Endothelial cell of umbilical vein (primary cell): ENCODE measurements at regions of chr2 and their contacts with region 1.

Region 1: GRCh38 chr2:10302479-10303180 is at the start of gene HPCAL1:
- DNase-seq: peak; percentile 81
- H3K4me3 ChIP-seq: peak within 1 kb of the TSS; percentile 67 to 78 (median 72)
- H3K27ac ChIP-seq: peak within 1 kb of the TSS; percentile 27
- H3K4me1 ChIP-seq: peaks cover 22% of the 10 kb centered on the region
- H3K27me3 ChIP-seq: no peaks in the 10 kb centered on the region
- CTCF ChIP-seq: peak; percentile 26 to 53
- POLR2A ChIP-seq: peak; percentile 89
- total RNA-seq, gene HPCAL1: 68.1 and 77.4 TPM in 2 replicates

Region 2: DNA sequence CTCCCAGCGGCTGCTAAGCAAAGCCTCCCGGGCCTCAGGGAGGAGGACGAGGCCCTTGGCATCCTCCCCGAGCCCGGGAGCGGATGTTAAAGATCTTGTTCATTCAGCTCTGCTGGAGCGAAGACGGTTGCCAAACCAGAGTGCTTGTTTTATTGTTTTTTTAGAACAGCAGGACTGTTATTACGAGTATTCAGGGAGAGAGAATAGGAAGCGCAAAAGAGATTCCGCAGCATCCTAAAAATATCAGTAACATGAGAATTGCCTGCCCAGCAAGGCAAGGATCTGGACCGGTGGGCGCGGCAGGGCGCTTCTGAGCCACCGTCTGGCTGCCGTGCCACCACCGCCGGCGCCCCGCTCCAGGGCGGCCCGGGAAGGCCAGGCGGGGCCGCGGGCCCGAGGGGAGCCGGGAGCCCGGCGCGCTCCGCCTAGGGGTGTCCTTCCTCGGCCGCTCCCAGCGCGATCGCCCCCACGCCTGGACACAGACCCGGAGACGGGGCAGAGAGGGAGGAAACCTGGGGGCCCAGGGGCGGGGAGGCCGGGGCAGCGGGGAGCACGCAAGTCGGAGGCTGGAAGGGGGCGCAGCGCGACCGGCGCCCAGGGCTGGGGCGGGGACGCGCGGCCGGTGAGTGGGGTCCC is 223.3 kb before region 1 on chr2:
- CTCF ChIA-PET with region 1: no interaction called
- POLR2A ChIA-PET with region 1: no interaction called
- dilution Hi-C with region 1: no loop called
- intact Hi-C with region 1: no loop called
- DNase-seq: no peak
- H3K4me3 ChIP-seq: peak overlapping the region in 1 of 3 experiments; percentile 36
- H3K27ac ChIP-seq: no peak overlapping the region
- H3K4me1 ChIP-seq: no peaks in the 10 kb centered on the region
- H3K27me3 ChIP-seq: peaks cover 47 to 59% of the 10 kb centered on the region in 2 experiments
- CTCF ChIP-seq: no peak
- POLR2A ChIP-seq: no peak

Region 3: DNA sequence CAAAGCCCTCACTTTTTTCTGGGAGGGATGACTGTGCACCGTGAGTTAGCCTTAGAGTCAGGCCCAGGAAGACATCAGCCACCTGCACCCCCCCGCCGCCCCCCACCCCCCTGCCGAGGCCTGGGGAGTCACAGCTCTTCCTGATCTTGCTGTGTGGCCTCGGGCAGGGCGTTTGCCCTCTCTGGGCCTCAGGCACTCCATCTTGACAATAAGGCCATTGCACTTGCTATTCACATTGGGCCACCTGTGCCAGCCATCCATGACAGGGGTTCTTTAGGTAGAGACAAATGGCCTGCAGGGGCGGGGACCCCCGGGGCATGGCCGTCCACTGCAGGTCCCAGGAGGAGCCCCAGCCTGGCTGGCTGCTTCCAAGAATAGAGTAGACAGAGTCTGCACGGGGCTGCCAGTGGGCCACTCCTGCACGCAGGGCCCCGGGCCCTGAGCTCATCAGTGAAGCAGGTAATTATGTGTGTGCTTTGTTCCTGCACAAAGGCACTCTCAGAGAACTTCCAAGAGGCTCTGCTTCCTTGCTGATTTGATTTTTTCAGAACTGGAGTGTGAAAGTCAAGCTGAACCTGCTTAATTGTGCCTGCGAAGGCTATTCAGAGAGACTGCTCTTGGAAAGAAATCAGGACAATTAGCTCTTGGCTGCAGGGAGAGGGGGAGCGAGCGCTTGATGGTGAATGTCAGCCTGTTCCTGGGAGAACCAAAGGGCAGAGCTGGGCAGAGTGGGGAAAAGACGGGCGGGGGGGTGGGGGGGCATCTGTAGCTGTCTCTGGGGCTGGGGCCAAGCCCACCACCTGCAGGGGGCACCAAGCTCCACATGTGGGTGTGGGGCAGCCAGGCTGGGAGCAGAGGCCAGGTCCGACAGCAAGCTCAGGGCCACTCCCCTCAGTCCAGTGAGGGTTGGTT is 139.8 kb before region 1 on chr2:
- CTCF ChIA-PET with region 1: interaction called, 14 read pairs
- POLR2A ChIA-PET with region 1: interaction called, 3 read pairs
- dilution Hi-C with region 1: no loop called
- intact Hi-C with region 1: loop called (anchors 1 kb)
- DNase-seq: peak; percentile 26
- H3K4me3 ChIP-seq: no peak overlapping the region
- H3K27ac ChIP-seq: peak overlapping the region; percentile 97
- H3K4me1 ChIP-seq: peaks cover 57% of the 10 kb centered on the region
- H3K27me3 ChIP-seq: no peaks in the 10 kb centered on the region
- CTCF ChIP-seq: peak in 1 of 2 donors; percentile 18
- POLR2A ChIP-seq: no peak

Region 4: DNA sequence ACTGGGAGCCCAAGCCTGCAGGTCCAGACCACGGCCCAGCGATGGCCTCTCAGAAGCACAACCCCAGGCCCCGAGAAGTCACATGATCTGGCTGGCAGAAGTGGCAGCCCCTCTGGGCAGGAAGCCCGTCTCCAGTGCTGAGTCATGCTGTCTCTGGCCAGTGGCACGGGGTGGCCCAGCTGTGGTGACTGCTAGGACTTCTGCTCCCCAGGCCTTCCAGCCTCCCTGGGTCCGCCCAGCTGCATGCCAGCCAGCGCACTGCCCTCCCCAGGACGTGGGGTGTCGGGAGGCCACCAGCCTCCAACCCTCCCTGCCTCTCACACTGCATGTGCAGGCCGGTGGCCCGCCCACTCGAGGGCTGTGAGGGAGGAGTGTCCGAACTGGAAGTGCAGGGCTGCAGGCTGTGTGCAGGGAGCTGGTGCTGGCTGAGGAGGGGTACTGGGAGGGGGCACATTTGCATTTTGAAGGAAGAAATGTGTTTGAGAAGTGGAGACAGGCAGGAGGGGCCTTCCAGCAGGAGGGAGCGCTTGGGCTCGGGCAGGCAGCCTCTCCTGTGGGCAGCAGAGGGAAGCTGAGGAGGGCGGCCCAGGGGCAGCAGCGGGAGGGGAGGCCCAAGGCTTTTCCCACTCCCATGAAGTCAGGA is 17.0 kb before region 1 on chr2:
- CTCF ChIA-PET with region 1: interaction called, 23 read pairs
- POLR2A ChIA-PET with region 1: interaction called, 4 read pairs
- dilution Hi-C with region 1: no loop called
- intact Hi-C with region 1: loop called (anchors 1 kb)
- DNase-seq: peak; percentile 79
- H3K4me3 ChIP-seq: no peak overlapping the region
- H3K27ac ChIP-seq: peak overlapping the region; percentile 22
- H3K4me1 ChIP-seq: peaks cover 31% of the 10 kb centered on the region
- H3K27me3 ChIP-seq: no peaks in the 10 kb centered on the region
- CTCF ChIP-seq: peak in 1 of 2 donors; percentile 2
- POLR2A ChIP-seq: no peak

Region 5: DNA sequence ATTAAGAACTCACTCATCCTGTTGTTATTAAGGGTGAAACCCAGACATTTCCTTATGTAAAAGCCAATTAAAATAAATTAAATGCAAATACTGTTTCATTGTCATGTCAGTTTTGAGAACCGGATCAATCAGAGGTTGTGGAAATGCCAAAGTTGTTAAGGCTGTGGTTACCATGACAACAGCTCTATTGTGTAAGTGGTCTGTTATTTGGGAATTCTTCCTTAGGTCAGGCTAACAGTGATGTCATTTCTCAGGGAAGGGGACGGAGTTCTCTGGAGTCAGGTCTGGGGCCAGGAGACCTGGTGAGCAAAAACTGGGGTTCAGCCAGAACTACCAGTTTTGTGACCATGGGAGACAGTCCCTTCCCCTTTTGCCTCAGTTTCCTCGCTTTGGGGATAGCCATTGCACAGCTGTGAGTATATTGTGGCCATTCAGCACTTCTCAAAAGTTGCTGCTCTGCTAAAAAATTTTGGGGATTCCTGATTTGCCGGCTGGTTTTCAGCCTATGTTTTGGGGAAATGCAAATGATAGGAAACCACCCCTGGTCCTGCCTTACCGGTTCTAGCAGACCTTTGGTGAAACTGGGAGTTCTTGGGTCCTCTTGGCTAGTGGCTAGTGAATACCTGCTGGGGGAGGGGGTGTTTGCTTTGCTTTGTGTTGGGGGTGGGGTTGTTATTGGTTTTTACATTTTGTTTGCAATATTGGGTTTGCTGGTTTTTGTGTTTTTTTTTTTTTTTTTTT is 21.6 kb after region 1 on chr2:
- CTCF ChIA-PET with region 1: interaction called, 33 read pairs
- POLR2A ChIA-PET with region 1: no interaction called
- dilution Hi-C with region 1: no loop called
- intact Hi-C with region 1: loop called (anchors 1 kb)
- DNase-seq: peak; percentile 88
- H3K4me3 ChIP-seq: no peak overlapping the region
- H3K27ac ChIP-seq: peak overlapping the region; percentile 80
- H3K4me1 ChIP-seq: peaks cover 31% of the 10 kb centered on the region
- H3K27me3 ChIP-seq: no peaks in the 10 kb centered on the region
- CTCF ChIP-seq: no peak
- POLR2A ChIP-seq: no peak

Region 6: DNA sequence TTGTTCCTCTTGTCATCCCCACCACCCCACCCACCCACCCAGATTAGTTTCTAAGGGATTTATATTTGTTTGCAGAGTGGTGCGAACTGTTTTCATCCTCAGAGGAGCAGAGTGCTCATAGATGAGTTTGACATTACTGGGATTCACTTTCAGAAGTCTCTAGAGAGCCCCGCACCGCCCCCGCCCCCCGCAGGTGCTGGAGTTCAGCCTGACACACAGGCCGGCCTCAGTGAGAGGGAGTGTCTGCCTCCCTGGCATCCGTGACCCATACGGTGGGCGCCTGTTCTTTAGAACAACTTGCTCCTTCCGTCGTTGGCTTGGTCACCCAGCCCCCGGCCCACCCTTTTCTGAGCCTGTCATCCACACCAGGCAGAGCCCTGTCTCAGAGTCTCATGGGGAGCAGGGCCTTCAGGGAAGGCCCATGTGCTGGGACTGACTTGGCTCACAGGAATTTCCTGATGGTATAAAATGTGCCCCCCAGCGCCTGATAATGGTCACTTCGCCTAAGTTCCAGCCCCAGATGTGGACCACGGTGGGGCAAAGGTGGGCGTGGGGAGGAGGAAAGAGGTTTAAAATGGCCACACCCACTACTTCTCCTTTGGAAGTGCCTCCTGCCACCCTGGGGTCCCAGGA is 44.4 kb after region 1 on chr2:
- CTCF ChIA-PET with region 1: interaction called, 14 read pairs
- POLR2A ChIA-PET with region 1: no interaction called
- dilution Hi-C with region 1: no loop called
- intact Hi-C with region 1: no loop called
- DNase-seq: peak; percentile 23
- H3K4me3 ChIP-seq: no peak overlapping the region
- H3K27ac ChIP-seq: peak overlapping the region; percentile 46
- H3K4me1 ChIP-seq: peaks cover 31% of the 10 kb centered on the region
- H3K27me3 ChIP-seq: no peaks in the 10 kb centered on the region
- CTCF ChIP-seq: peak in 1 of 2 donors; percentile 15
- POLR2A ChIP-seq: no peak